ENCODE measurements at regions of chr18 and their contacts with region 1.

Region 1: GRCh38 chr18:46250084-46250811 is 146.1 kb downstream of the HAUS1 start:
- DNase-seq: no peak
- ATAC-seq: peak; percentile 94
- H3K4me3 Mint-ChIP-seq: peak overlapping the region; percentile 78
- H3K27ac Mint-ChIP-seq: peak overlapping the region; percentile 94
- H3K4me1 Mint-ChIP-seq: peaks cover 46% of the 10 kb centered on the region
- H3K27me3 Mint-ChIP-seq: no peaks in the 10 kb centered on the region
- CTCF ChIP-seq: no peak

Region 2: GRCh38 chr18:46097801-46098615 is 152.2 kb before region 1 on chr18 and contains the start of gene ATP5F1A:
- CTCF ChIA-PET with region 1: no interaction called
- POLR2A ChIA-PET with region 1: interaction called, 14 read pairs
- intact Hi-C with region 1: loop called (anchors 1 kb)
- DNase-seq: peak; percentile 78
- ATAC-seq: peak; percentile 86
- H3K4me3 Mint-ChIP-seq: peak within 1 kb of the TSS; percentile 97
- H3K27ac Mint-ChIP-seq: peak within 1 kb of the TSS; percentile 97
- H3K4me1 Mint-ChIP-seq: peaks cover 35% of the 10 kb centered on the region
- H3K27me3 Mint-ChIP-seq: no peaks in the 10 kb centered on the region
- CTCF ChIP-seq: no peak
- total RNA-seq, gene ATP5F1A: 336 and 348 TPM in 2 replicates

Region 3: GRCh38 chr18:46104128-46104911 is 145.9 kb before region 1 on chr18 and contains the start of gene HAUS1:
- CTCF ChIA-PET with region 1: no interaction called
- POLR2A ChIA-PET with region 1: no interaction called
- intact Hi-C with region 1: loop called (anchors 1 kb)
- DNase-seq: peak; percentile 81
- ATAC-seq: peak; percentile 99
- H3K4me3 Mint-ChIP-seq: peak within 1 kb of the TSS; percentile 98
- H3K27ac Mint-ChIP-seq: peak within 1 kb of the TSS; percentile 82
- H3K4me1 Mint-ChIP-seq: peaks cover 19% of the 10 kb centered on the region
- H3K27me3 Mint-ChIP-seq: no peaks in the 10 kb centered on the region
- CTCF ChIP-seq: no peak
- total RNA-seq, gene HAUS1: 34.6 and 39.5 TPM in 2 replicates

Region 4: DNA sequence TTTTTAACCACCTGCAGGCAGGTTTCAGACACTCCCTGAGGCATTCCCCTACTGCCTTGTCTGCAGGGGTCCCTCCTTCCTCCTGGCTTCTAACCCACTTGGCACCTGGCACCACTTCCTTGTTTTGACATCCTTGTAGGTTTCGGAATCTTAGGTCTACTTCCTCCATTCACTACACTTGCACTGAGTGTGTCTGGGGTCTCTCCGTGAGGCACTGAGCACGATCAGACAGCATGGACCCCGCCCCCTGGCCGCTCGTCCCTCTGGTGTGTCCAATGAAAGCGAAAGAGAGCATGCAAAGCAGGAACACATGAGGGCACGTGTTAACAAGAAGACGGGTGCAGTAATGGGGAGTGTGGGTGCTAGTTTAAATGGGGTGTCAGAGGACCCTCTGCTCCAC is 82.3 kb before region 1 on chr18:
- CTCF ChIA-PET with region 1: interaction called, 18 read pairs
- POLR2A ChIA-PET with region 1: interaction called, 16 read pairs
- intact Hi-C with region 1: loop called (anchors 1 kb)
- DNase-seq: peak; percentile 69
- ATAC-seq: peak; percentile 97
- H3K4me3 Mint-ChIP-seq: peak overlapping the region; percentile 76
- H3K27ac Mint-ChIP-seq: peak overlapping the region; percentile 91
- H3K4me1 Mint-ChIP-seq: peaks cover 28% of the 10 kb centered on the region
- H3K27me3 Mint-ChIP-seq: no peaks in the 10 kb centered on the region
- CTCF ChIP-seq: no peak

Region 5: DNA sequence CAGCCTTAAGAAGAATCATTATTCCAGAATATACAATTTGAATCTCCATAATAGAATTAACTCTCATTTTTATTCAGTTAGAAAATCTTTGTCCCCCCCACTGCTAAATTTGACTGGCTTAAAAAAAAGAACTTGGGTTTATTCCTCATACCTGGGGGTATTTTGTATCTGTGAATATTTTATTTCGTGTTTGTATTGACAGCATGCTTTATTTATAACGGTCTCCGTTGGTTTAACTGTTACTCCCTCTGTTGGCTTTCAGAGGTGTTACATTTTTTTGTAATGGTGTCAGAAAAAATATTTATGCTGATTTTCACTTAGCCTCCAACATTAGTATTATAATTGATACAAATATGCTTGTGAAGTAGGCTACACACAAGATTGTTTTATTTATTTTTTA is 37.0 kb before region 1 on chr18:
- CTCF ChIA-PET with region 1: no interaction called
- POLR2A ChIA-PET with region 1: no interaction called
- intact Hi-C with region 1: loop called (anchors 5 kb)
- DNase-seq: no peak
- ATAC-seq: peak; percentile 52
- H3K4me3 Mint-ChIP-seq: no peak overlapping the region
- H3K27ac Mint-ChIP-seq: no peak overlapping the region
- H3K4me1 Mint-ChIP-seq: peaks cover 53% of the 10 kb centered on the region
- H3K27me3 Mint-ChIP-seq: no peaks in the 10 kb centered on the region
- CTCF ChIP-seq: peak; percentile 44

Measured in activated B cell treated with CpG ODN at 0.5 μM for 24 hours (primary cell).